ENCODE measurements at regions of chr6 and their contacts with region 1.

Region 1: DNA sequence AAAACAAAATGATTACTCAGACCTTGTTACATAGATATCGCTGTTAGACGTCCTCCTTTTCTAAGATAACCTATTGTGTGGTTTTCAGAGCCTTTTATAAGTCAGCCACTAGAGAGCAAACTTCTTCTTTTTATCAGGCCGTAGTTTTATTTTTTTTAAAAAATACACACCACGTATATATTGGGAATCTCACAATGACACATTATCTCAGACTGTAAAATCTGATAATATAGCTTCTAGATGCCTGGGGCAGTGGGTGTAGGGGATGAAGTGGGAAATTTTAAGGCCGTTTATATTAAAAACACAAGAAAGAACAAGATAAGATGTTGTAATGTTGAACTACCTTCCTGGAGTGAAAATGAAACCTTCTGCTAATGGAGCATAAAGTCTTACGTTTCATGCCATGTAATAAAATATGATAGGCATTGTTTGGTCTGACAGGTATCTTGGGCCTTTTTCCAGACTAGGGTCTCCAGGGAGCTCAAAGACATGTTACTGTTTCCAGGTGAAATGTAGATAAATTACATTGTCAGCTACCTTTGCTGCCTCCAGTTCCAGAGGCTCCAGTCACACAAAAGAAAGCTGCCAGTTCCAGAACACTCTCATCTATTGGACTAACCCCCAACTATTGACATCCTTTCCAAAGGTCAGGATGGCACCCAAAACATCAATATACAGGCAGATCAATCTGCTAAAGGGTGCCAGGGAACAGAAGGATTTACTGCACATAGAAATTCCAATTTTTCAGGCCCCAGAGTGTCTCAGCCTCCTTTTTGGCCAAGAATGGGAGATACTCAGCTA is 130.2 kb upstream of the AKIRIN2 start:
- DNase-seq: peak; percentile 33
- H3K4me3 ChIP-seq: peak overlapping the region; percentile 37 to 46 (median 44)
- H3K27ac ChIP-seq: peak overlapping the region; percentile 29
- H3K4me1 ChIP-seq: peaks cover 5% of the 10 kb centered on the region
- H3K27me3 ChIP-seq: no peaks in the 10 kb centered on the region
- CTCF ChIP-seq: peak; percentile 43 to 55

Region 2: DNA sequence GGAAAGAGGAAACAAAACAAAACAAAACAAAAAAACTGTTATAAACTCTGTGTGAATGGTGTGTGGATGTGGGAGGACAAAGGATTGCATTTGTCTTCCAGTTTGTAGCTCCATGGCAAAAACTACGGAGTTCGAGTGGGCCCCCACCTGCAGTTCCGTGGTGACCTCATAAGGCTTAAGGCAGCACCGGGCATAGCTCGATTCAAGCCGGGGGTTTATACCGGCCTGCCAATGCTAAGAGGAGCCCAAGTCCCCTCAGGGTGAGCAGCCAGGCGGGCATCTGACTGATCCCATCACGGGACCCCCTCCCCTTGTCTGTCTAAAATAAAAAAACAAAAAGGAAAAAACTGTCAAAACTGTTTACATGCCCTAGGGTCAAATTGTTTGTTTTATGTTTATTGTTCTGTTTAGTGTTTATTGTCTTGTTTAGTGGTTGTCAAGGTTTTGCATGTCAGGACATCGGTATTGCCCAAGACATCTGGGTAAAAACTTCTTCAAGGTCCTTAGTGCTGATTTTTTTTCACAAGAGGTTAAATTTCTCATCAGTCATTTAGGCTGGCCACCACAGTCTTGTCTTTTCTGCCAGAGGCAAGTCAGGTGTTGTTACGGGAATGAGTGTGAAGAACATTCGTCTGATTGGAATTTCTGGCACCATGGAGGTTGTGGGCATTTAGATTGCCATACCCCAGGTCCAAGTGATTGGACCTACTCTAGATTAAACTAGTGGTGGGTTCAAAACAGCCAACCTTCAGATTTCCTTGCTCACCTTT is 1358.0 kb before region 1 on chr6:
- CTCF ChIA-PET with region 1: no interaction called
- dilution Hi-C with region 1: no loop called
- in situ Hi-C with region 1: no loop called
- intact Hi-C with region 1: no loop called
- DNase-seq: no peak
- H3K4me3 ChIP-seq: no peak overlapping the region
- H3K27ac ChIP-seq: no peak overlapping the region
- H3K4me1 ChIP-seq: no peaks in the 10 kb centered on the region
- H3K27me3 ChIP-seq: no peaks in the 10 kb centered on the region
- CTCF ChIP-seq: no peak

Region 3: GRCh38 chr6:88238065-88238464 is 405.8 kb after region 1 on chr6:
- CTCF ChIA-PET with region 1: no interaction called
- dilution Hi-C with region 1: no loop called
- in situ Hi-C with region 1: no loop called
- intact Hi-C with region 1: loop called (anchors 1 kb)
- DNase-seq: peak; percentile 8
- H3K4me3 ChIP-seq: no peak overlapping the region
- H3K27ac ChIP-seq: no peak overlapping the region
- H3K4me1 ChIP-seq: no peaks in the 10 kb centered on the region
- H3K27me3 ChIP-seq: no peaks in the 10 kb centered on the region
- CTCF ChIP-seq: peak; percentile 36 to 58

Region 4: DNA sequence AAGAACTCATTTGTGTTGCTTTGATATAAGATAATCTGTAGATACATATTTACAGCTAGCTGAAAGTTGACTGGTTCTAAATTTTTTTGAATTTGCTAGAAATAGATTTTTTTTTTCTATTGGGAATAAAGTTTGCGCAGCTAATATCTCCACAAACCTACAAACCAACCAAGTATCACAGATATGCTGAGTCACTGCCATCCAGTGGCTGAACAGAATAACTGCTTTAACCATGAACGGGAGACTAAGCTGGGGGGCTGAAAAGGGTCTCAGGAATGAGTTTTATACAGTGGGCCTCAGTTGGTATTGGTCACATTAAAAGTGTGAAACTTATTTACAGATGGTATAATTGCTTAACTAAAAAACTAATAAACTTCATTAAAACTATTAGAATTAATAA is 660.6 kb after region 1 on chr6:
- CTCF ChIA-PET with region 1: no interaction called
- dilution Hi-C with region 1: no loop called
- in situ Hi-C with region 1: no loop called
- intact Hi-C with region 1: loop called (anchors 2 kb)
- DNase-seq: no peak
- H3K4me3 ChIP-seq: no peak overlapping the region
- H3K27ac ChIP-seq: no peak overlapping the region
- H3K4me1 ChIP-seq: no peaks in the 10 kb centered on the region
- H3K27me3 ChIP-seq: no peaks in the 10 kb centered on the region
- CTCF ChIP-seq: peak; percentile 18 to 61

Region 5: GRCh38 chr6:88780714-88781389 is 948.6 kb after region 1 on chr6:
- CTCF ChIA-PET with region 1: no interaction called
- dilution Hi-C with region 1: no loop called
- in situ Hi-C with region 1: no loop called
- intact Hi-C with region 1: loop called (anchors 2 kb)
- DNase-seq: peak; percentile 56
- H3K4me3 ChIP-seq: no peak overlapping the region
- H3K27ac ChIP-seq: no peak overlapping the region
- H3K4me1 ChIP-seq: no peaks in the 10 kb centered on the region
- H3K27me3 ChIP-seq: no peaks in the 10 kb centered on the region
- CTCF ChIP-seq: peak; percentile 63 to 89

Region 6: DNA sequence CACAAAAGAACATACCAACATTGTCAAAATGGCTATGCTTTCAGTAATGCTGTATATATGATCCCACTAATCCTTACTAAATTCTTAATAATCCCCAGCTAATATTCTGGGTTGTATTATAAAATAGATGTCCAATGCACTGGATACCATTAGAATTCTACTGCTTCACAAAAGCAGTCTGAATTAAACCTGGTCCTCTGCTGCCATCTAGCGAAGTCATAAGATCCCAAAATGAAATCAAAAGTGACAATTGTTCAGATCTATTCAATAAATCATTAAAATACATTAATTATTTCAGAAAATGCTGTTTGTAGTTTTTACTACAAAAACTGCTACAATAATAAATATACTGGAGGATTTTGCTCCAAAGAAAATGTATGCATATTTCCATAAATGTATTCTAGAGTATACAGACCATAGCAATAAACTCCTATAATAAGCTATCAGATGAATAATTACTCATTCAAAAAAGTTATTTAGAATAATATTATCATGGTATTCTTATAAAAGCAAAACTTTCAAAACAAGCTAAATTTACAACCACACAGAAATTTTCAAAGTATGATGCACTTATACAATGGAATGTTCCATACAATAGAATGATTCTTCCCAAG is 1038.6 kb after region 1 on chr6:
- CTCF ChIA-PET with region 1: no interaction called
- dilution Hi-C with region 1: no loop called
- in situ Hi-C with region 1: no loop called
- intact Hi-C with region 1: loop called (anchors 5 kb)
- DNase-seq: peak; percentile 37
- H3K4me3 ChIP-seq: no peak overlapping the region
- H3K27ac ChIP-seq: no peak overlapping the region
- H3K4me1 ChIP-seq: peaks cover 8% of the 10 kb centered on the region
- H3K27me3 ChIP-seq: no peaks in the 10 kb centered on the region
- CTCF ChIP-seq: peak; percentile 49 to 59

Measured in mammary epithelial cell (primary cell).